IMR-90 (cell line): ENCODE measurements at regions of chr17 and their contacts with region 1.

Region 1: DNA sequence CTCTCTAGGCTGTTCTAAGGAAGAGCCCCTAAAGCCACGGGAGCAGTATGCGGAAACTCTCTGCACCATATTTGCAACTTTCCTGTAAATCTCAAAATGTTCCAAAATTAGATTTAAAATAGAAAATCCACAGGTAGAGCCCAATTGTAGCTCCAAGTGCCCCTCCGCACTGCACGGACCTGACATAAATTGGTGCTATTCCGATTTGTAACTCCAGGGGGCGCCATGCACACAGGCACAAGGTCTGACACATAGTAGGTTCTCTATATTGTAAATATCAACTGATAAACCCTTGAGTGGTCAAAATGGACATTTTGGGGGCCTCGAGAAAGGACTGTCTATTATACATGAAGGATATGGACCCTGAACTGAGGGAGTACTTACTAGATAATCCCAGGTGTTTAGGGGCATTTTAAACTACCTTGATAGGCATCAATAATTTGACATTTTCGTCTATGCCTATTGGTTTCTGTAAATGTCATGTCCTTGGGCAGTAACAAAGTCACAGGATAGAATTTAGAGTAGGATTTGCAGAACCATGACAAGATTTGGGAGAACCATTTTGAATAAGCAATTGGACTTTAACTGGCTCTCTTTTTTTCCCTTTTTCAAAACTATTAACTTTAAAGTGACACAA is 36.6 kb upstream of the TMEM132E start:
- DNase-seq: no peak
- ATAC-seq: peak; percentile 46; the same call in 1 of the 2 replicates
- H3K4me3 ChIP-seq: no peak overlapping the region
- H3K27ac ChIP-seq: no peak overlapping the region
- H3K4me1 ChIP-seq: no peaks in the 10 kb centered on the region
- H3K27me3 ChIP-seq: peaks cover 1% of the 10 kb centered on the region; the same call in 1 of the 2 replicates
- CTCF ChIP-seq: peak; percentile 67
- POLR2A ChIP-seq: no peak
- RAD21 ChIP-seq: peak; percentile 69

Region 2: GRCh38 chr17:34637548-34638525 is 95.0 kb after region 1 on chr17:
- CTCF ChIA-PET with region 1: interaction called, 3 read pairs
- POLR2A ChIA-PET with region 1: no interaction called
- dilution Hi-C with region 1: no loop called
- in situ Hi-C with region 1: no loop called
- intact Hi-C with region 1: loop called (anchors 1 kb)
- DNase-seq: peak; percentile 56
- ATAC-seq: peak; percentile 99
- H3K4me3 ChIP-seq: no peak overlapping the region
- H3K27ac ChIP-seq: no peak overlapping the region
- H3K4me1 ChIP-seq: no peaks in the 10 kb centered on the region
- H3K27me3 ChIP-seq: peaks cover 11% of the 10 kb centered on the region; the same call in 1 of the 2 replicates
- CTCF ChIP-seq: peak; percentile 80
- POLR2A ChIP-seq: no peak
- RAD21 ChIP-seq: peak; percentile 54

Region 3: DNA sequence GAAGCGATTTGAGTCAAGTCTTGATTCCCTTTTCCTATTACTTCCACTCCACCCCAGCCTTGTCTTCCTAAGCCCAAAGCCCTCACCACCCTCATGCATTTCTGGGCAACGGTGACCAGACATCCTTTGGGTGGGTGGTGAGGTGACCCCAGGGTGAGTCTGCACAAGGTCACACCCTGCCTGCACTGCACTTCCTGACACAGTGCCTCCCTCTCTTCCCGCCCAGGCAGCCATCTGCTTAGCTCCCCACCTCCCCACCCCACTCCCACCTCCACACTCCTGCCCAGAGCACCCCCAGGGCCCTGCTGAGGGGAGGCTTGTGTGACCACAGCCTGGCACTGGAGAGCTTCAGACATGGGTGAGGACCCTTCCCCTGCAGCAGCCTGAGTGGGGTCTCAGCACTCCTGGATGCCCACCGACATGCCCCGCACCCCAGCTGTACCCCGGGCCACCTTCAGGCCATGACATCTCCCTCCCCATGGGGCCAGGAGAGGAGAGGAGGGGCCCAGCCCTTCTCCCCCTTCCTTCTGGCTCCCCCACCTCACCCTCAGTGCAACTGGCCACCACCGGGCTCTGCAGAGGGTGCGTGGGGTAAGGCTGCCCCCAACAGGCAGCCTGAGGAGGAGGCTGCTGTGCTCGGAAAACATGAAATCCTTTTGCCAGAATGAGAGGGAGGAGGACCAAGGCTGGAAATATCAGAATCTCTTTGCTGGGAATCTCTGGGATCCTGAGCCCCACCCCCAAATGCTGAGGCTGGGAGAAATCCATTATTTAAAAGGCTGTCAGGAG is 349.8 kb after region 1 on chr17:
- CTCF ChIA-PET with region 1: no interaction called
- POLR2A ChIA-PET with region 1: no interaction called
- dilution Hi-C with region 1: no loop called
- in situ Hi-C with region 1: no loop called
- intact Hi-C with region 1: loop called (anchors 10 kb)
- DNase-seq: no peak
- ATAC-seq: peak; percentile 35; the same call in 1 of the 2 replicates
- H3K4me3 ChIP-seq: no peak overlapping the region
- H3K27ac ChIP-seq: no peak overlapping the region
- H3K4me1 ChIP-seq: no peaks in the 10 kb centered on the region
- H3K27me3 ChIP-seq: peaks cover 6% of the 10 kb centered on the region; the same call in 1 of the 2 replicates
- CTCF ChIP-seq: peak; percentile 20; the same call in 1 of the 2 replicates
- POLR2A ChIP-seq: no peak
- RAD21 ChIP-seq: peak; percentile 31